Activated naive CD4-positive, alpha-beta T cell treated with anti-CD3 and anti-CD28 coated beads for 36 hours (primary cell): ENCODE measurements at regions of chr1 and their contacts with region 1.

Region 1: GRCh38 chr1:183873642-183874041 is 68.7 kb downstream of the RGL1 start:
- DNase-seq: no peak
- H3K4me3 Mint-ChIP-seq: no peak overlapping the region
- H3K27ac Mint-ChIP-seq: no peak overlapping the region
- H3K4me1 Mint-ChIP-seq: peaks cover 19% of the 10 kb centered on the region
- H3K27me3 Mint-ChIP-seq: no peaks in the 10 kb centered on the region

Region 2: DNA sequence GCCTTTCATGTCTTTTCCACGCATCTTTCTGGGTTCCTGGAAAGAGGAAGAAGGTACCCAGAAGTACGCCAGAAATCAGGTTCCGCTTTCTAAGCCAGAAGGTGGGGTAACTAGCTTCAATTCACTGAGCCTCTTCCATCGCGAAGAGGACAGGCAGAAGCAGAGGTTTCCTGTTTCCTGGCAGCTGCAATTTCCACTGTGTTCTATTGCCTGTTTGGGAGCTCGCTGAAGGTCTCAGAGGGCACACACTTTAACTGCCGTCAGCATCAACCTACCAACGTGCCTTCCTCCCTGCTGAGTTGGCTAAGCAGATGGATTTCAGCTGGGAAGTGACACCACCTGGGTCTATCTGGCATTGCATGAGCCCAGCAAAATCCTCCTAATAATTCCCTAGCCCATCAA is 293.4 kb before region 1 on chr1:
- CTCF ChIA-PET with region 1: no interaction called
- intact Hi-C with region 1: no loop called
- DNase-seq: peak; percentile 32
- H3K4me3 Mint-ChIP-seq: no peak overlapping the region
- H3K27ac Mint-ChIP-seq: no peak overlapping the region
- H3K4me1 Mint-ChIP-seq: peaks cover 8% of the 10 kb centered on the region
- H3K27me3 Mint-ChIP-seq: no peaks in the 10 kb centered on the region

Region 3: DNA sequence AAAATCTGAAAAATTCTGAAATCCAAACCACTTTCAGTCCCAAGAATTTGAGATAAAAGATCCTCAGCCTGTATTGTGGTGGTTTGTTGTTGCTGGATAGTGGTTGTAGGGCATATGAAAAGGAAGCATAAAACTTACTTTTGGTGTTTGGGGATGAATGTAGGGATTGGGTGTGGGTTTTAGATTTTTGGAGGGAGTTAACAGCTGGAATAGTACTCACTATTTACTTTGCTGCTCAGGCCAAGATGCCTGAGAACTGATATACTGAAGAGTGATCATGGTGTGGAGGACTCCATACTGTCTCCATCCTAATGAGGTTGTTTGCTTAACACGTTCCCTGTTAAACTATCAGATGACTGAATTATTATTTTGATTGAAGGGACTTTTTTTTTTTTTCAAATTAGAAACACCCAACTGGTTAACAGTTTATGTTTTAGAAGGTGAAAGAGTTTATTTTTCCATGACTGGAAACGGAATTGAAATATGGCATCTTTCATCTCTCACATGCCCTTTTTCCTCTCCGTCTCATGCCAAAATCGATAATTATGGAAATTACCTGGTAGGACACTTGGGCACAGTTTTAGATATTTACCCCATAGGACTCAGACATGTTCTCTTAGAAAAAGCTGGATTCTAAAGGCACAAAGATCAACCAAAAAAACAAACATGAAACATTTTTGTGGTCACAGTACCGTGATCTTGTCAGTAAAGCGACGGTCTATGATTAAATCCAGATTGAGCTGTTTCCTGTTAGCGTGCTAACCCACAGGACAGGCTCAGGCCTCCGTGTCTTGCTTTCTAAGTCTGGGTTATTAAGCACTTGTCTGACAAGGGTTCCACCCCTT is 31.5 kb before region 1 on chr1:
- CTCF ChIA-PET with region 1: no interaction called
- intact Hi-C with region 1: no loop called
- DNase-seq: peak; percentile 58
- H3K4me3 Mint-ChIP-seq: peak overlapping the region; percentile 56
- H3K27ac Mint-ChIP-seq: peak overlapping the region; percentile 88
- H3K4me1 Mint-ChIP-seq: peaks cover 28% of the 10 kb centered on the region
- H3K27me3 Mint-ChIP-seq: no peaks in the 10 kb centered on the region

Region 4: GRCh38 chr1:183891158-183891856 is 17.7 kb after region 1 on chr1:
- CTCF ChIA-PET with region 1: no interaction called
- intact Hi-C with region 1: loop called (anchors 2 kb)
- DNase-seq: no peak
- H3K4me3 Mint-ChIP-seq: no peak overlapping the region
- H3K27ac Mint-ChIP-seq: no peak overlapping the region
- H3K4me1 Mint-ChIP-seq: peaks cover 31% of the 10 kb centered on the region
- H3K27me3 Mint-ChIP-seq: no peaks in the 10 kb centered on the region